CD4-positive, alpha-beta T cell (primary cell): ENCODE measurements at regions of chr17 and their contacts with region 1.

Region 1: DNA sequence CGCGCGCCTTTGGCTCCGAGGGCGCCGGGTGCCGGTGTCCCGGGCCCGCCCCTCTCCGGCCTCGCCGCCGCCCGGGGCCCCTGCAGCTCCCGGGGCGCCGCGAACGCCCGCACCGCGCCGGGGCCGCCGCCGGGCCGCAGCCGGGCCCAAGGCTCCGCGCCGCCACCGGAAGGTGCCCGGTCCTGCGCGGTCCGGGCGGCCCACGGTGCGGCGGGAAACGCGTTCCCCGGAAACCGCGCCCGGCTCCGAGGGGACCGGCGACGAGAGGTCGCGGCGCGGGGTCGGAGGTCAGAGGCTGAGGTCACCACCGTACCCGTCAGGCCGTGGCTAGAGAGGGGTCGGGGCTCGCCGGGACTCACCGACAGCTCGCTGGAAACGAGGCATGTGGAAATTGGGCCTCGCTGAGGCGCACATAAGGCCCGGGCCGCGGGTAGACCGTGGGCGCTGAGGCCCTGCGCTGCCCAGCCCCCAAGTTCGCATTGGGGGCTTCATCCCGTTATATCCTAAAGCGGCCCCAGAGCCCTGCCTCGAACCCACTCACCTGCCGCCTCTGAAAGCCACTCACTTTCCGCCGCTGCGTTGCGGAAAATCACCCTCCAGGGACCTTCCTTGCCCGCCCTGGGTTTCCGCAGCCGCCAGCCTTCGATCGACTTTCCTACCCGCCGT is at the start of gene DUS1L:
- DNase-seq: peak; percentile 43 to 89 (median 66)
- ATAC-seq: peak; percentile 88
- H3K4me3 ChIP-seq: peak within 1 kb of the TSS; percentile 81
- H3K4me3 Mint-ChIP-seq: peak within 1 kb of the TSS; percentile 89
- H3K27ac ChIP-seq: peak within 1 kb of the TSS; percentile 65 to 85
- H3K27ac Mint-ChIP-seq: peak within 1 kb of the TSS; percentile 88
- H3K4me1 ChIP-seq: peaks cover 34% of the 10 kb centered on the region
- H3K4me1 Mint-ChIP-seq: peaks cover 9% of the 10 kb centered on the region
- H3K27me3 ChIP-seq: no peaks in the 10 kb centered on the region
- H3K27me3 Mint-ChIP-seq: no peaks in the 10 kb centered on the region
- CTCF ChIP-seq: no peak
- total RNA-seq, gene DUS1L: 160 to 163 TPM

Region 2: GRCh38 chr17:81844327-81844851 is 221.4 kb before region 1 on chr17:
- CTCF ChIA-PET with region 1: no interaction called
- POLR2A ChIA-PET with region 1: no interaction called
- intact Hi-C with region 1: no loop called
- DNase-seq: no peak
- ATAC-seq: no peak
- H3K4me3 ChIP-seq: no peak overlapping the region
- H3K4me3 Mint-ChIP-seq: no peak overlapping the region
- H3K27ac ChIP-seq: no peak overlapping the region
- H3K27ac Mint-ChIP-seq: no peak overlapping the region
- H3K4me1 ChIP-seq: no peaks in the 10 kb centered on the region
- H3K4me1 Mint-ChIP-seq: no peaks in the 10 kb centered on the region
- H3K27me3 ChIP-seq: no peaks in the 10 kb centered on the region
- H3K27me3 Mint-ChIP-seq: no peaks in the 10 kb centered on the region
- CTCF ChIP-seq: no peak

Region 3: GRCh38 chr17:82006468-82007227 is 59.1 kb before region 1 on chr17:
- CTCF ChIA-PET with region 1: no interaction called
- POLR2A ChIA-PET with region 1: no interaction called
- intact Hi-C with region 1: no loop called
- DNase-seq: no peak
- ATAC-seq: no peak
- H3K4me3 ChIP-seq: no peak overlapping the region
- H3K4me3 Mint-ChIP-seq: no peak overlapping the region
- H3K27ac ChIP-seq: no peak overlapping the region
- H3K27ac Mint-ChIP-seq: no peak overlapping the region
- H3K4me1 ChIP-seq: no peaks in the 10 kb centered on the region
- H3K4me1 Mint-ChIP-seq: no peaks in the 10 kb centered on the region
- H3K27me3 ChIP-seq: no peaks in the 10 kb centered on the region
- H3K27me3 Mint-ChIP-seq: no peaks in the 10 kb centered on the region
- CTCF ChIP-seq: no peak

Region 4: GRCh38 chr17:82051776-82052637 is 13.8 kb before region 1 on chr17 and contains the starts of genes GPS1 and RFNG:
- CTCF ChIA-PET with region 1: no interaction called
- POLR2A ChIA-PET with region 1: interaction called, 16 read pairs
- intact Hi-C with region 1: loop called (anchors 1 to 2 kb)
- DNase-seq: peak; percentile 68 to 90 (median 80)
- ATAC-seq: peak; percentile 92
- H3K4me3 ChIP-seq: peak within 1 kb of the TSS; percentile 75
- H3K4me3 Mint-ChIP-seq: peak within 1 kb of the TSS; percentile 86
- H3K27ac ChIP-seq: no peak within 1 kb of the TSS
- H3K27ac Mint-ChIP-seq: peak within 1 kb of the TSS; percentile 71
- H3K4me1 ChIP-seq: peaks cover 41% of the 10 kb centered on the region
- H3K4me1 Mint-ChIP-seq: peaks cover 14% of the 10 kb centered on the region
- H3K27me3 ChIP-seq: no peaks in the 10 kb centered on the region
- H3K27me3 Mint-ChIP-seq: no peaks in the 10 kb centered on the region
- CTCF ChIP-seq: no peak
- total RNA-seq, gene GPS1: 64.6 to 69.3 TPM
- total RNA-seq, gene RFNG: 28.1 to 31.2 TPM

Region 5: DNA sequence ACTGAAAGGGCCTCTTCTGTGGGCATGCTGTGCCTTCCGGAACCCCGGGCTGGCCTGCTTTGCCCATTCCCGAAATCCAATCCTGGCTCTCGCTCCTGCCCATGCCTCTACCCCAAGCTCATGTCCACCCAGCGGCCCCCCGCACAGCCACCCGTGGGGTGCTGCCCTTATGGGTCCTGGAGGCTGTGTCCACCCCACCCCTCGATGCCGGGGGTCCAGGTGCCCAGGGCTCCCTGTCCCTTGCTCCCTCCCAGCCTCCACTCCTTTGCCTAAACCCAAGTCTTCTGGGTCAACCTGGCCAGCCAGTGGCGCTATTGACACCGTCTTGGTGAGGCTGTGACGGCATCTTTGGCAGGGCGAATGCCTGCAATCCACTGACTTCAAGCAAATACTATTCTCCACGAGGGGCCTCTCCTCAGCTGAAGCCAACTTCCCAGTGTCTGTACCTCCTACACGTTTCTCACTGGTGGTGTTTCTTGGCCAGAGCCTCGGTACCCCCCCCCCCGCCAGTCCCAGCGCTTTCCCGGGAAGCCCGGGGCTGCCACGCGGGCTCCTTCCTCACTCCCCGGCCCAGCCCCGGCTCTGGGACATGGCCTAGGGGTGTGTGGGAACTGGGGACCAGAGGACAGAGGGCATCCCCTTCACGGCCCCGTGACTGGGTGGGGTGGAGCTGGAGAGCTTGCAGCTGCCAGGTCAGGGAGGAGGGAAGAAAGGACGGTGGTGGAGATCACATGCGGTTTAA is 12.0 kb after region 1 on chr17:
- CTCF ChIA-PET with region 1: no interaction called
- POLR2A ChIA-PET with region 1: no interaction called
- intact Hi-C with region 1: no loop called
- DNase-seq: peak in 1 of 14 experiments; percentile 7
- ATAC-seq: peak; percentile 6
- H3K4me3 ChIP-seq: no peak overlapping the region
- H3K4me3 Mint-ChIP-seq: peak overlapping the region; percentile 45
- H3K27ac ChIP-seq: no peak overlapping the region
- H3K27ac Mint-ChIP-seq: no peak overlapping the region
- H3K4me1 ChIP-seq: no peaks in the 10 kb centered on the region
- H3K4me1 Mint-ChIP-seq: no peaks in the 10 kb centered on the region
- H3K27me3 ChIP-seq: no peaks in the 10 kb centered on the region
- H3K27me3 Mint-ChIP-seq: no peaks in the 10 kb centered on the region
- CTCF ChIP-seq: no peak